SK-N-SH (cell line): ENCODE measurements at regions of chr19 and their contacts with region 1.

Region 1: GRCh38 chr19:3324321-3324856 is 42.0 kb upstream of the NFIC start:
- DNase-seq: peak; percentile 74
- H3K4me3 ChIP-seq: no peak overlapping the region
- H3K27ac ChIP-seq: no peak overlapping the region
- H3K4me1 ChIP-seq: no peaks in the 10 kb centered on the region
- H3K27me3 ChIP-seq: peaks cover 15% of the 10 kb centered on the region; the same call in 1 of the 2 replicates
- CTCF ChIP-seq: peak; percentile 80
- EP300 ChIP-seq: no peak
- RAD21 ChIP-seq: peak; percentile 33

Region 2: DNA sequence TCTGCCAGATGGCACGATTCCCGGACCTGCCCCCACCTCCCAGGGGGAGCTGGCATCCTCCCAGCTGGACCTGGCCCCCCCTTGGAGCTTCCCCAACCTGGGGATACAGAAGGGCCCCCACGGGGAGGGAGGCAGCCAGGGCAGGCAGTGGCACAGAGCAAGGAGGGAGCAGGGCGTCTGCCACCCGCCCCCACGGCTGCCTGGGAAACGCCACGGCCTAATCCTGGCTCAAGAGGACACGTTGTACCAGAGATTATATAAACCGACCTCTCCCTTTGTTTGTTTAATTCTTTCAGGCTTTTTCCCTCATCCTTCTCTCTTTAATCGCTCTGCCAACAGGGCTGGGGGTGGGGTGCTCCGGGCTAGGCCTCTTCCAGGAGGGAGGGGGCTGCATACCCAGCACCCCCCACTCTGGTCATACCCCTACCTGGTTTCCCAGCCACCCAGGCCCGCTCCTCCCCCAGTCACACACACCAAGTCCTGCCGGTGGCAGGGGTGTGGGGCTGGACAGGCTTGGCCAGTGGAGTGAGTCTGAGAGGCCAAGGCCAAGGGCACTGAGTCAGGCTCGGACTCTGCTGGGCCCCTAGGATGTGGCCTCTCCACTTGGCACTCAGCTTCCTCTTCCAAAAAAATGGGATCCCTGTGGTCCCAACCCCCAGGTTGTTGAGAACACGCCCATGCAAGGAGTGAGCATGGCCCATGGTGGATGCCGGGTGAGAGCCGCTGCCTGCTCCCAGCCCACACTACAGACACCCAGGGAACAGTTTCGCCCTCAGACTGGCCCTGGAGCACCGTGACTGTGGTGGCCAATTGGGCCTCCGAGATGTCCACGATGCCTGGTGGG is 12.5 kb after region 1 on chr19:
- CTCF ChIA-PET with region 1: interaction called, 10 read pairs
- POLR2A ChIA-PET with region 1: no interaction called
- DNase-seq: peak; percentile 76
- H3K4me3 ChIP-seq: no peak overlapping the region
- H3K27ac ChIP-seq: peak overlapping the region; percentile 40 to 83
- H3K4me1 ChIP-seq: peaks cover 7 to 23% of the 10 kb centered on the region in 2 experiments; a peak in 3 of 4 replicates
- H3K27me3 ChIP-seq: no peaks in the 10 kb centered on the region
- CTCF ChIP-seq: no peak
- EP300 ChIP-seq: 0 out of 4 replicates have a peak, but pooled peaks of 1 of the 2 experiments have one; percentile 26
- RAD21 ChIP-seq: no peak

Region 3: GRCh38 chr19:3407556-3408516 is 83.4 kb after region 1 on chr19:
- CTCF ChIA-PET with region 1: no interaction called
- POLR2A ChIA-PET with region 1: no interaction called
- DNase-seq: no peak
- H3K4me3 ChIP-seq: no peak overlapping the region
- H3K27ac ChIP-seq: no peak overlapping the region; a peak in 1 of 4 replicates
- H3K4me1 ChIP-seq: peaks cover 0 to 26% of the 10 kb centered on the region in 2 experiments; a peak in 2 of 4 replicates
- H3K27me3 ChIP-seq: no peaks in the 10 kb centered on the region
- CTCF ChIP-seq: no peak
- EP300 ChIP-seq: no peak
- RAD21 ChIP-seq: no peak